Activated B cell treated with CpG ODN at 0.5 μM for 24 hours (primary cell): ENCODE measurements at regions of chr1 and their contacts with region 1.

Region 1: GRCh38 chr1:40939320-40940059 is 40.0 kb upstream of the CTPS1 start:
- DNase-seq: no peak
- ATAC-seq: no peak
- H3K4me3 Mint-ChIP-seq: no peak overlapping the region
- H3K27ac Mint-ChIP-seq: no peak overlapping the region
- H3K4me1 Mint-ChIP-seq: no peaks in the 10 kb centered on the region
- H3K27me3 Mint-ChIP-seq: peaks cover 7% of the 10 kb centered on the region
- CTCF ChIP-seq: no peak

Region 2: DNA sequence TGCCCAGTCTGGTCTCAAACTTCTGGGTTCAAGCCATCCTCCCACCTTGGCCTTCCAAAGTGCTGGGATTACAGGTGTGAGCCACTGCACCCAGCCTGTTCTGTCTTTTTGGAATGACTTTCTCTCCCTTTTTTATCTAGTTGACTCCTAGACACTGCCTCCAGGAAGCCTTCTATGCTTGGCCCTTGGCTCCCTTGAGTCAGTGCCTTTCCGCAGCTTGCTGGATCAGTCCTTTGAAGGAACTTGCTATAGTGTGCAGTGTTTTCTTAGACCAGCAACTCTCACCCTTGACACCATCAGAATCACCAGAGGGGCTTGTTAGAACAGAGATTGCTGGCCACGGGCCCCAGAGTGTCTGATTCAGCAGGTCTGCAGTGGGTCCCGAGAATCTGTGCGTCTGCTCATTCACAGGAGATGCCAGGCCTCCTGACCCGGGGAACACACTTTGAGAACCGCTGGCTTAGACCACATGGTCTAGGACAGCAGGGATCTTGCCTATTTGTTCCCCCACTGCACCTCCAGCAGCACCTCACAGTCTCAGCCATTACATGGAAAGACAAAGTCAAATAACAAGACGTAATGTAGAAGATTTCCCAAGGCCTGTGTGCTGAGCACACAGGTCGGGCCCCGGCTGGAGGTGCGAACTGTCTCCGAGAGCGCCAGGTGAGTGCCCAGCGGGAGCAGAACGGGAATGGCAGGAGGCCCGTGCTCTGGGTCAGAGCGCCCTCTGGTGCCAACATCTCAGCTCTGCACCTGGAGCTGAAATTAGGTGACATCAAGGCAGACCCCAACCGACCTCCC is 12.7 kb after region 1 on chr1:
- CTCF ChIA-PET with region 1: interaction called, 18 read pairs
- POLR2A ChIA-PET with region 1: no interaction called
- intact Hi-C with region 1: no loop called
- DNase-seq: peak; percentile 47
- ATAC-seq: peak; percentile 64
- H3K4me3 Mint-ChIP-seq: no peak overlapping the region
- H3K27ac Mint-ChIP-seq: peak overlapping the region; percentile 42
- H3K4me1 Mint-ChIP-seq: peaks cover 5% of the 10 kb centered on the region
- H3K27me3 Mint-ChIP-seq: peaks cover 36% of the 10 kb centered on the region
- CTCF ChIP-seq: peak; percentile 23

Region 3: DNA sequence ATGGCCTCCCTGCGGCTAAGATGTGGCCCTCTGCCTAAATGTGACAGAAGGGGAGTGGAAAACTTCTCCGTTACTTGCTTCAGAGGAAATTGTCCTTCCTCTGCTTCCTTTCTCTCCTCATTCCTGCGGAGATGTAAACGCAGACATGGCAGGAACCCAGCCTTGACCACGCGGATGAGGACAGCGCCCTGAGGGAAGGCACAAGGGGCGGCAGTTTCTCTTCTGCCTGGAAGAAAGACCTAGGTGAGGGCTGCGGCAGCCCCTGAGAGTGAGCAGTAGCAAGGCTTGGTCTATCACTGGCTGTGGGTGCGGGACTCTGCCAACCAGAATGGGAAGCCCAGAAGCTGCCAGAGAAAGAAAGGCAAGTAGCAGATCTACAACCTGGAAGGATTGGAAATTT is 26.0 kb after region 1 on chr1:
- CTCF ChIA-PET with region 1: no interaction called
- POLR2A ChIA-PET with region 1: no interaction called
- intact Hi-C with region 1: no loop called
- DNase-seq: no peak
- ATAC-seq: no peak
- H3K4me3 Mint-ChIP-seq: no peak overlapping the region
- H3K27ac Mint-ChIP-seq: no peak overlapping the region
- H3K4me1 Mint-ChIP-seq: peaks cover 4% of the 10 kb centered on the region
- H3K27me3 Mint-ChIP-seq: no peaks in the 10 kb centered on the region
- CTCF ChIP-seq: no peak